Activated CD4-positive, alpha-beta T cell treated with anti-CD3 and anti-CD28 coated beads, Interleukin-2, amount 10 ng/mL, durations not matched to agents 24 days and 14 days (primary cell): ENCODE measurements at regions of chr3 and their contacts with region 1.

Region 1: GRCh38 chr3:180973543-180973942 is 16.0 kb downstream of the DNAJC19 start:
- DNase-seq: no peak
- H3K4me3 Mint-ChIP-seq: no peak overlapping the region
- H3K27ac Mint-ChIP-seq: no peak overlapping the region
- H3K4me1 Mint-ChIP-seq: peaks cover 6% of the 10 kb centered on the region
- H3K27me3 Mint-ChIP-seq: no peaks in the 10 kb centered on the region

Region 2: GRCh38 chr3:180989291-180990163 is 16.0 kb after region 1 on chr3 and contains the start of gene DNAJC19:
- intact Hi-C with region 1: loop called (anchors 2 kb)
- DNase-seq: peak; percentile 97
- H3K4me3 Mint-ChIP-seq: peak within 1 kb of the TSS; percentile 97
- H3K27ac Mint-ChIP-seq: peak within 1 kb of the TSS; percentile 96
- H3K4me1 Mint-ChIP-seq: peaks cover 20% of the 10 kb centered on the region
- H3K27me3 Mint-ChIP-seq: peaks cover 10% of the 10 kb centered on the region
- total RNA-seq, gene DNAJC19: 53.7 and 62.6 TPM in 2 replicates